OCI-LY7 (cell line): ENCODE measurements at regions of chr10 and their contacts with region 1.

Region 1: DNA sequence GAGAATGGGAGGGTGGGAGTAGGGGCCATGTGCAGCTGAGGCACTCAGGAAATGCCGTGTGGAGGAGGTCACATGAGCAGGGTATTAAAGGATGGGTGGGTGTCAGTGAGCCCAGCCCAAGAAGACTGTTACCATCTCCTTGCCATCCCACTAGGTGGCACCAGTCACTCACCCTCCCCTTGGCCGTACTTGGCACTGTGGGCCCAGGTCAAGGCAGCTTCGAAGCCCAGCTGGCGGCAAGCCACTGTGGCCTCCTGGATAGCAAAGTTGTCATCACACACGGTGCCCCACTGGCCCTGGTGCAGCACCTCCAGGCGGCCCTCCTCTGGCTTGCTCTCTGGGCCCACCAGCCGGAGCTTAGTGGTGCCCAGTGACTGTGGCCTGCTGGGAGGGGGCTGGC is 5.4 kb downstream of the LOXL4 start:
- DNase-seq: peak; percentile 13
- H3K4me3 ChIP-seq: no peak overlapping the region
- H3K27ac ChIP-seq: no peak overlapping the region
- H3K4me1 ChIP-seq: no peaks in the 10 kb centered on the region
- CTCF ChIP-seq: peak; percentile 56

Region 2: DNA sequence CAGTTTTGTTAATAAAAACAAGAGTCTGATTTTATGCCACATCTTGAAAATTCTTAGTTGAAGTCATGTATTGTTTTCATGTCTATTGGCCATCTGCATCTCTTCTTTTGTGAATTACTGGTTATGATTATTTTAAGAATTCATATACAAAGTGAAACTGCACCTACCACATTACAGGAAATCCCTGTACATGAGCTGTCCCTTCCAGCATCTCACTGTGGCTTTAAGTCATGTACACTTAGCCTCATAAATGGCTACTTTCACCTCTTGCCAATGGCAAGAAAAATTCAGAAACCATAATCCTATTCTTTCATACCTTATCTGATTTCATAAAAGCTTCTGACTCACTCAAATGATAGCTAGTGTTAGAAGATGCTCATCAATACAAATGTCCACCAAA is 280.8 kb before region 1 on chr10:
- CTCF ChIA-PET with region 1: no interaction called
- POLR2A ChIA-PET with region 1: no interaction called
- intact Hi-C with region 1: no loop called
- DNase-seq: no peak
- H3K4me3 ChIP-seq: no peak overlapping the region
- H3K27ac ChIP-seq: no peak overlapping the region
- H3K4me1 ChIP-seq: no peaks in the 10 kb centered on the region
- CTCF ChIP-seq: no peak

Region 3: GRCh38 chr10:98134431-98135221 is 127.9 kb before region 1 on chr10 and contains the start of gene R3HCC1L:
- CTCF ChIA-PET with region 1: no interaction called
- POLR2A ChIA-PET with region 1: no interaction called
- intact Hi-C with region 1: no loop called
- DNase-seq: peak; percentile 97
- H3K4me3 ChIP-seq: peak within 1 kb of the TSS; percentile 90
- H3K27ac ChIP-seq: peak within 1 kb of the TSS; percentile 92
- H3K4me1 ChIP-seq: peaks cover 59% of the 10 kb centered on the region
- CTCF ChIP-seq: no peak
- total RNA-seq, gene R3HCC1L: 42.0 and 48.5 TPM in 2 replicates

Region 4: DNA sequence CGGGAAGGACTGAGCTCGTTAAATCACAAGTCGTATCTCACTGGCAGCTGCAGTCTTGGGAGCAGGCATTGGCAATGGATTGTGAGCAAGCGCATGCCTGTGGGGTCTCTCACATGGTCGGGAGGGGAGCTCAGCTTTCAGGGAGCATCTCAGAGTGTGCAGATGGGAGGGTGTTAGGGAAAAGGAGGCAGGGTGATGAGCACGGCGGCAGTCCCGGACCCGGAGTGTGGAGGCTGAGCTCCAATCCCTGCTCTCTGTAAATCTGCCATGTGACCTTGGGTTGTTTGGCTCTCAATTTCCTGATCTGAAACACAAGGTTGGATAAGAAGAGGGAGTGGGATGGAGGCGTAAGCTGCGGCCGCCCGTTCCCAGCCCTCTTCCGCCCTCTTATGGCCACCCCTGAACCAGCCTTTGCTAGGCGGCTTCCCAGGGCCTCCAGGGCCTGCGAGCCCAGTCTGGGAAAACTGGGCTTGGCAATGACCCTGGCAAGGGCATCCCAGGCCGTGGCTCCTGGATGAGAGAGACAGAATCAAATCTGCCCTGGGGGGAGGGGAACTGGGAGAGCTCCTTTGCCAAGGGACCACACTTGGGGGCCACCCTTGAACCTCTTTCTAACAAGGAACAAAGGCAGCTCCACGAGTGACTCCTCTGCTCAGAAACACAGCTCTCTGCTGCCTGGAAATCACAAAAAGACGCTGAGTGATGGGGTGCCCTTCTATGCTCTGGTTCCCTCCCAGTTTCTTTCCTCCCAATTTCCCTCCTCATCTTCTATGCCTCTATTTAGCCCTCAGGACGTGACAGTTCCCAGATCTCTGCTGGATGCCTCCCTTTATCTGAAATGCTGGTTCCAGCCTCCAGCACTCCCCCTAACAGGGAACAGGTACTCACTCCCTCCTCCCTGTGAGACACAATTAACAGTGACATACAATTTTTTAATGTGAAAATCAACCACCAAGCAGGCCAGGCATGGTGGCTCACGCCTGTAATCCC is 47.1 kb after region 1 on chr10:
- CTCF ChIA-PET with region 1: no interaction called
- POLR2A ChIA-PET with region 1: no interaction called
- intact Hi-C with region 1: no loop called
- DNase-seq: peak; percentile 10
- H3K4me3 ChIP-seq: no peak overlapping the region
- H3K27ac ChIP-seq: no peak overlapping the region
- H3K4me1 ChIP-seq: no peaks in the 10 kb centered on the region
- CTCF ChIP-seq: peak; percentile 60

Region 5: GRCh38 chr10:98391578-98391991 is 129.0 kb after region 1 on chr10:
- CTCF ChIA-PET with region 1: no interaction called
- POLR2A ChIA-PET with region 1: no interaction called
- intact Hi-C with region 1: loop called (anchors 5 kb)
- DNase-seq: peak; percentile 25
- H3K4me3 ChIP-seq: no peak overlapping the region
- H3K27ac ChIP-seq: no peak overlapping the region
- H3K4me1 ChIP-seq: peaks cover 9% of the 10 kb centered on the region
- CTCF ChIP-seq: no peak